Prostate gland (tissue), 2 donors: ENCODE measurements at regions of chr11 and their contacts with region 1.

Region 1: GRCh38 chr11:128290106-128290840 is 297.1 kb downstream of the ETS1 start:
- DNase-seq: peak; percentile 64
- H3K4me3 ChIP-seq: no peak overlapping the region
- H3K27ac ChIP-seq: no peak overlapping the region
- H3K4me1 ChIP-seq: no peaks in the 10 kb centered on the region
- H3K27me3 ChIP-seq: no peaks in the 10 kb centered on the region
- CTCF ChIP-seq: peak; percentile 60 to 80 (median 77)
- POLR2A ChIP-seq: no peak

Region 2: GRCh38 chr11:128172046-128172878 is 118.0 kb before region 1 on chr11:
- intact Hi-C with region 1: loop called (anchors 5 kb)
- DNase-seq: peak; percentile 73
- H3K4me3 ChIP-seq: no peak overlapping the region
- H3K27ac ChIP-seq: no peak overlapping the region
- H3K4me1 ChIP-seq: no peaks in the 10 kb centered on the region
- H3K27me3 ChIP-seq: no peaks in the 10 kb centered on the region
- CTCF ChIP-seq: peak in 3 of 4 experiments; percentile 61 to 72 (median 70)
- POLR2A ChIP-seq: no peak

Region 3: GRCh38 chr11:128251140-128251539 is 39.1 kb before region 1 on chr11:
- intact Hi-C with region 1: no loop called
- DNase-seq: no peak
- H3K4me3 ChIP-seq: no peak overlapping the region
- H3K27ac ChIP-seq: no peak overlapping the region
- H3K4me1 ChIP-seq: no peaks in the 10 kb centered on the region
- H3K27me3 ChIP-seq: no peaks in the 10 kb centered on the region
- CTCF ChIP-seq: no peak
- POLR2A ChIP-seq: no peak

Region 4: DNA sequence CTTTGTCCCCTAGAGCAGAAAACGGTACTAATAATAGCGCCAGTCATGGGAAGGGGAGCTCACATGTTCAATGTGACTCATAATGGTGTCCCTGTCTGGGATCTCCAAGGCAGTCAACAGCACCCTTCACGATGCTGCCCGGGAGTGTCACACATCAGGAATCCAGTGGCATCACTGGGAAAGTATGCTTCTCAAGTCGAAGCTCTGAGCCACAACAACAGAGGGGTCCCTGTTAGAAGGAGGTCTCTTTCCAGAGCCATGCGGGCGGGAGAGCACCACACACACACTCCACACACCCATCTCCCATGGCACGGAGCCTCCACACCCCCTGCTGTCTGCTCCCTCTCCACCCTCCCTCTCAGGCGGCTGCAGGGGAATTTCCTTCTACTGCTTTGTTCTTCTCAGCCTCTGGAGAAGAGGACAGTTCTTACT is 177.4 kb after region 1 on chr11:
- intact Hi-C with region 1: loop called (anchors 10 kb)
- DNase-seq: no peak
- H3K4me3 ChIP-seq: no peak overlapping the region
- H3K27ac ChIP-seq: no peak overlapping the region
- H3K4me1 ChIP-seq: no peaks in the 10 kb centered on the region
- H3K27me3 ChIP-seq: no peaks in the 10 kb centered on the region
- CTCF ChIP-seq: no peak
- POLR2A ChIP-seq: no peak

Region 5: DNA sequence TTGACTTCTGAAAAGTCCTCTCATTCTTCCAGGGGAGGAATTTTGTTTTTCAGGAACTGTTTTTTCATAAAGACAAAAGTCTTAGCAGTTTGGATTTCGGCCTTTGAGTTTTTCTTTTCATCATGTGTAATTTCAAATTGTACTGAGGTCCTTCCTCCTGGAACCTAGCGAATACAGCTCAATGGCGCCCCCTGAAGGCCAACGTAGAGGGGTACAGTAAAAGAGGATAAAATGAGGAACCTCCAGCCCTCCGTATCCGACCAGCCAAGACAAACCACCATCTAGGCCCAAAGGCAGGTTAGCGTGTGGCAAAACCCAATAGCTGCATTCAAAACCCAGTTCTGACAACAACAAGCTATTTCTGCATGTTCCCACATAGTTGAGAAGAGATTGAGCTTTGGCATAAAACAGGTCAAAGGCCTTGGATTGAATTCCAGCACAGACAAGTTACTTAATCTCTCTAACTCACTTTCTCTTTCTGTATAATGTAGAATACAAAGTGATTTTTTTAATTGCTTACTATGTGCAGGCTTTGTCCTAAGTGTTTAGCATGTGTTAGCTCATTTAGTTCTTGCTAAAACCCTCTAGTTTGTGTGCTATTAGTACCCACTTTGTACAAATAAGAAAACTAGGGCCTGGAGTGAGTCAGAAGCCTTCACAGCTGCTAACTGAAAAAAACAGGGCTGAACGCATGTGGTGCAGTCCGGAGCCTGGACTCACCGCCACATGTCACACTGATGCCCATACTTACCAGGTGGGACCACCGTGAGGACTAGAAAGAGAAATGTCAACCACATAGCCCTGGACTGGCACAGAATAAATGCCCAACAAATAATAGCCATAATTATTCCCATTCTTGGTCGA is 340.3 kb after region 1 on chr11:
- intact Hi-C with region 1: loop called (anchors 2 kb)
- DNase-seq: peak; percentile 69
- H3K4me3 ChIP-seq: no peak overlapping the region
- H3K27ac ChIP-seq: no peak overlapping the region
- H3K4me1 ChIP-seq: no peaks in the 10 kb centered on the region
- H3K27me3 ChIP-seq: no peaks in the 10 kb centered on the region
- CTCF ChIP-seq: peak; percentile 80 to 93 (median 89)
- POLR2A ChIP-seq: no peak